Caco-2 (cell line): ENCODE measurements at regions of chr4 and their contacts with region 1.

Region 1: DNA sequence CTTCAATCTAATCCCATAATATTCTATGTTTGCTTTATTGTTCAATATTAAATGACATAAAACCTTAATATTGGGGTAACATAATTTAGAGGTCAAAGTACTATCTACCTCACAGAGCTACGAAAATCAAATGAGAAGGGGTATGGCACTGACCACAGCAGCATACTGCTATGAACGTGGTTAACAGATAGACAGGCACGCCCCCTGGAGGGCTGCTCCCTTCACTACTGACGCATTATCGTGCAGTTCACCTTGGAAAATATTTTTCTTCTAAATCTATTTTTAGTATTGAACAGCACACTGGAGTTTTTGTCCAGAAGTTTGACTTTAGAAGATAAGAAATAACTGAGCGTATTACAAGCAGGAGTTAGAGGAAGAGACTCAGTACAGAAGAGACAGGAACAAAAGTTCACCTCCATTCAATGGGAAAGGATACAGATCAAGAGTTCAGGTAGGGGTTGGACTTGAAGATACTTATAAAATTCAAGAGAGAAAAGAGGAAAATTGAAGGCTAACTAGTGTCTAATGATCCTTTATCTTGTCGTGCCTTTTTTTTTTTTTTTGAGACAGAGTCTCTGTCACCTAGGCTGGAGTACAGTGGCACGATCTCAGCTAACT is 22.7 kb downstream of the MAP9 start:
- DNase-seq: peak; percentile 59 to 71
- H3K4me3 ChIP-seq: no peak overlapping the region
- H3K4me3 Mint-ChIP-seq: no peak overlapping the region
- H3K27ac Mint-ChIP-seq: no peak overlapping the region
- H3K4me1 ChIP-seq: no peaks in the 10 kb centered on the region
- H3K4me1 Mint-ChIP-seq: peaks cover 2% of the 10 kb centered on the region
- H3K27me3 ChIP-seq: no peaks in the 10 kb centered on the region
- H3K27me3 Mint-ChIP-seq: peaks cover 5% of the 10 kb centered on the region
- CTCF ChIP-seq: peak; percentile 80 to 84

Region 2: DNA sequence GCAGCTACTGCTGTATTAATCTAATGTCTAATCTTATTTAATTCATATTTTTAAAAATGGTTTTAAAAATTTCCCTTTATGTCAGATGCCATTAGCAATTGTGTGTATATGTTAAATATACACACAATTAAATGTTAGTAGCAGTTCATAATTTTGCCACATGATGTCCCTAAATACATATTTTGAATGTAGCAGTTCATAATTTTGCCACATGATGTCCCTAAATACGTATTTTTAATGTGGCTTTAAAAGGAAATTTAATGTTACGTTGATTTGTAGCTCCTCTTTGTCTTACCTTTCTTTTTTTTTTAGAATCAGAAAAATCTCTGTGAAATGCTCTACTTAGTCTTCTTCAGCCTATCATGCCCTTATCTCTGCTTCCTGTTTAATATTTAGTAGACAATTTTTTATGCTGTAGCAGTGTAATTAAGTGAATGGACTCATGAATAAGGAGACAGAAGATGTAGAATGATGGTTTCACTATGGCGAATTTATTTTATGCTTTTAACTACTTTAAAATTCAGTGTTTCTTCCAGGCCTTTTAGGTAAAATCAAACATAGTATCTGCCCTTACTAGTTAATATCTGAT is 546.9 kb before region 1 on chr4:
- CTCF ChIA-PET with region 1: no interaction called
- POLR2A ChIA-PET with region 1: no interaction called
- intact Hi-C with region 1: loop called (anchors 1 kb)
- DNase-seq: peak in 1 of 2 experiments; percentile 4
- H3K4me3 ChIP-seq: no peak overlapping the region
- H3K4me3 Mint-ChIP-seq: no peak overlapping the region
- H3K27ac Mint-ChIP-seq: no peak overlapping the region
- H3K4me1 ChIP-seq: no peaks in the 10 kb centered on the region
- H3K4me1 Mint-ChIP-seq: no peaks in the 10 kb centered on the region
- H3K27me3 ChIP-seq: no peaks in the 10 kb centered on the region
- H3K27me3 Mint-ChIP-seq: no peaks in the 10 kb centered on the region
- CTCF ChIP-seq: peak; percentile 66 to 72

Region 3: DNA sequence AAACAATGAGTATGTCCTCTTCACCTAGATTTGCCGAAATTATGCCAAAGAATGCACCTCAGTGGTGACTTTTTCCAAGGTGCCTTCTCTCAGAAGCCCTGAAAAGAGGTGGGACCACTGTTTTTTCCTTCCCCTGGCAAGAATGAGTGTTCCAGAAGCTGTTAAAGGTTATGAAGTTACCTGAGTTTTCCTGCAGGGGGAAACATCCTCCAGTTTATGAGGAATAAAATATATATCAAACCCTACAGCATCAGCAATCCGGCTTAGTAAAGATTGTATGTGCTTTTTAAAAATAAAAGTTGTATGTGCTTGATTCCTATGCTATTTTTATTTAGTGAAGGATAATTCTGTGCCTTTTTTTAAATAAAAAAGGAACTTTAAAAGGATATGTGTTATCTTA is 499.7 kb before region 1 on chr4:
- CTCF ChIA-PET with region 1: no interaction called
- POLR2A ChIA-PET with region 1: no interaction called
- intact Hi-C with region 1: loop called (anchors 1 kb)
- DNase-seq: no peak
- H3K4me3 ChIP-seq: no peak overlapping the region
- H3K4me3 Mint-ChIP-seq: no peak overlapping the region
- H3K27ac Mint-ChIP-seq: no peak overlapping the region
- H3K4me1 ChIP-seq: no peaks in the 10 kb centered on the region
- H3K4me1 Mint-ChIP-seq: no peaks in the 10 kb centered on the region
- H3K27me3 ChIP-seq: no peaks in the 10 kb centered on the region
- H3K27me3 Mint-ChIP-seq: peaks cover 2% of the 10 kb centered on the region
- CTCF ChIP-seq: peak in 1 of 2 experiments; percentile 6

Region 4: GRCh38 chr4:154982187-154983047 is 371.6 kb before region 1 on chr4:
- CTCF ChIA-PET with region 1: no interaction called
- POLR2A ChIA-PET with region 1: no interaction called
- intact Hi-C with region 1: loop called (anchors 1 kb)
- DNase-seq: peak; percentile 52 to 55
- H3K4me3 ChIP-seq: no peak overlapping the region
- H3K4me3 Mint-ChIP-seq: no peak overlapping the region
- H3K27ac Mint-ChIP-seq: no peak overlapping the region
- H3K4me1 ChIP-seq: no peaks in the 10 kb centered on the region
- H3K4me1 Mint-ChIP-seq: no peaks in the 10 kb centered on the region
- H3K27me3 ChIP-seq: no peaks in the 10 kb centered on the region
- H3K27me3 Mint-ChIP-seq: peaks cover 21% of the 10 kb centered on the region
- CTCF ChIP-seq: peak; percentile 51 to 64

Region 5: DNA sequence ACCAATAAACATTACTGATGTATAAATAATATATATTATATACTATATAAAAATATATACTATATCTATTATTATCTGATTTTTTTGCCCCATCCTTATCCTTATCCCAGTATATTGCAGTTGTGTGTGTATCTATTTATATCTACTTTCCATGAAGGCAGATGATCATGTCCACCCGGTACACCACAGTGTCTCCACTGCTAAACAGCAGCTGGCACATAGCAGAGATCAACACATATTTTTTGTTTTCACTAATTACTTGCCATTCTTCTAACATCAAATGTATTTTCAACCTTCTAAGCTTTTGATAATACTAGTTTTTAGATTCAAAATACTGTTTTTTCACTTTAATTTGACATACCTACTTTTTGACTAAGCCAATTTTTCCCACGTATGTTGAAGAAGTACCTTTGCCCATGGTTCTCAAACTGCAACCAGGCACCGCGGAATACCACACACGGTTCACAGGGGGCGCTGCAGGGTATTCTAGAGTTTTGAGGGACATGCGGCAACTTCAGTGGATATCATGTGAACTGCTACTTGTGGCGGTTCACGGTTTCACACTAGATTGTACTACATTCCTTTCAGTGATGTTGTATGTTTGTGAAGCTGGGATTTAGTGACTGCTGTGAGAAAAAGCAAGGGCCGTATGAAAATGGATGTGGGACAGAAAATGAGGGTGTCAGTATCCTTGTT is 328.1 kb before region 1 on chr4:
- CTCF ChIA-PET with region 1: no interaction called
- POLR2A ChIA-PET with region 1: no interaction called
- intact Hi-C with region 1: loop called (anchors 5 kb)
- DNase-seq: peak; percentile 53 to 58
- H3K4me3 ChIP-seq: no peak overlapping the region
- H3K4me3 Mint-ChIP-seq: no peak overlapping the region
- H3K27ac Mint-ChIP-seq: no peak overlapping the region
- H3K4me1 ChIP-seq: no peaks in the 10 kb centered on the region
- H3K4me1 Mint-ChIP-seq: no peaks in the 10 kb centered on the region
- H3K27me3 ChIP-seq: no peaks in the 10 kb centered on the region
- H3K27me3 Mint-ChIP-seq: peaks cover 4% of the 10 kb centered on the region
- CTCF ChIP-seq: peak; percentile 51 to 54

Region 6: GRCh38 chr4:155038459-155038858 is 315.6 kb before region 1 on chr4:
- CTCF ChIA-PET with region 1: no interaction called
- POLR2A ChIA-PET with region 1: no interaction called
- intact Hi-C with region 1: no loop called
- DNase-seq: no peak
- H3K4me3 ChIP-seq: no peak overlapping the region
- H3K4me3 Mint-ChIP-seq: no peak overlapping the region
- H3K27ac Mint-ChIP-seq: no peak overlapping the region
- H3K4me1 ChIP-seq: no peaks in the 10 kb centered on the region
- H3K4me1 Mint-ChIP-seq: no peaks in the 10 kb centered on the region
- H3K27me3 ChIP-seq: no peaks in the 10 kb centered on the region
- H3K27me3 Mint-ChIP-seq: peaks cover 3% of the 10 kb centered on the region
- CTCF ChIP-seq: no peak

Region 7: GRCh38 chr4:155134136-155134535 is 219.9 kb before region 1 on chr4:
- CTCF ChIA-PET with region 1: no interaction called
- POLR2A ChIA-PET with region 1: no interaction called
- intact Hi-C with region 1: loop called (anchors 10 kb)
- DNase-seq: no peak
- H3K4me3 ChIP-seq: no peak overlapping the region
- H3K4me3 Mint-ChIP-seq: no peak overlapping the region
- H3K27ac Mint-ChIP-seq: no peak overlapping the region
- H3K4me1 ChIP-seq: no peaks in the 10 kb centered on the region
- H3K4me1 Mint-ChIP-seq: no peaks in the 10 kb centered on the region
- H3K27me3 ChIP-seq: no peaks in the 10 kb centered on the region
- H3K27me3 Mint-ChIP-seq: no peaks in the 10 kb centered on the region
- CTCF ChIP-seq: no peak

Region 8: DNA sequence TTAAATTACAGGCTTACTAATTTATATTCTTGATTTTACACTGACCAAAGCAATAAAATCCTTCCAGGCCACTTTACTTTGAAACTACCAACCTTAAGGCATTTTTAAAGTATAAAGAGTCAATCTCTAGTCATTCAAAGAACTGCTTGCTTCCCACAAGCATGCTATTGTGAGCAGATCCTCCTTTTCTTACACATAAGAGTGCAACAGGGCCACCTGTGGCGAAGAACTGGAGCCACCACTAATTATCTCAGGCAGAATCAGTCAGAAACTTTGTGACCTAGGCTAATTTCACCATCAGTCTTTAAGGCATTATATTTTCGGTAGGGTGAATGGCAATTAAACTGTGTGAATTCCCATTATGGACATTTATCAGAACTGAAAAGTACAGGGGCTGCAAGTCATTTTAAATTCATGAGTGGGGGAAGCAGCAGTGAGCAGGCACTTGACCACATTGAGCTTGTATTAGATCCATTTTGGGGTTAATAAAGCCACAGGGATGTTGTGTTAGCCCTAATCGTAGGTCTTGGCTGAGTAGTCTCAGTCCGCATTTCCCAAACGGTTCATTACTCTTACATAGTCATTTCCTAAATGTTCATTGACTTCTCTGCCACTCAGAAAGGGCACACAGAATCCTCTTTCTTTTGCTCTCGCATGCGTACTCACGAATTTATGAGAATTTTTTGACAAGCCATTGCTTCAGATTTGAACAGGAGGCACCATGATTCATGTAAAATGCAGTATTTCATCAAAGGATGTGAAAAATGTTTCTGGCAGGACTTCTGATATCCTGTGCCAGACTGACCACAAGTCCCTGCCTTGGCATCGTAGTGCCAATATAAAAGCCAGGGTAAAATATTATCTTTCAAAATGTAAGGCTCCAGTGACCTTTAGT is 105.8 kb before region 1 on chr4:
- CTCF ChIA-PET with region 1: no interaction called
- POLR2A ChIA-PET with region 1: no interaction called
- intact Hi-C with region 1: loop called (anchors 10 kb)
- DNase-seq: no peak
- H3K4me3 ChIP-seq: no peak overlapping the region
- H3K4me3 Mint-ChIP-seq: no peak overlapping the region
- H3K27ac Mint-ChIP-seq: no peak overlapping the region
- H3K4me1 ChIP-seq: no peaks in the 10 kb centered on the region
- H3K4me1 Mint-ChIP-seq: no peaks in the 10 kb centered on the region
- H3K27me3 ChIP-seq: no peaks in the 10 kb centered on the region
- H3K27me3 Mint-ChIP-seq: no peaks in the 10 kb centered on the region
- CTCF ChIP-seq: no peak

Region 9: GRCh38 chr4:155405059-155405458 is 51.0 kb after region 1 on chr4:
- CTCF ChIA-PET with region 1: no interaction called
- POLR2A ChIA-PET with region 1: no interaction called
- intact Hi-C with region 1: no loop called
- DNase-seq: no peak
- H3K4me3 ChIP-seq: no peak overlapping the region
- H3K4me3 Mint-ChIP-seq: no peak overlapping the region
- H3K27ac Mint-ChIP-seq: no peak overlapping the region
- H3K4me1 ChIP-seq: peaks cover 18% of the 10 kb centered on the region
- H3K4me1 Mint-ChIP-seq: peaks cover 18% of the 10 kb centered on the region
- H3K27me3 ChIP-seq: no peaks in the 10 kb centered on the region
- H3K27me3 Mint-ChIP-seq: no peaks in the 10 kb centered on the region
- CTCF ChIP-seq: no peak